PC-9 (cell line): ENCODE measurements at regions of chr7 and their contacts with region 1.

Region 1: GRCh38 chr7:43834463-43835251 is 34.7 kb downstream of the MRPS24 start:
- DNase-seq: peak in 1 of 2 experiments; percentile 83
- H3K4me3 ChIP-seq: peak overlapping the region; percentile 36; the same call in 1 of the 2 replicates
- H3K27ac ChIP-seq: no peak overlapping the region
- H3K4me1 ChIP-seq: no peaks in the 10 kb centered on the region; the same call in 1 of the 2 replicates
- H3K27me3 ChIP-seq: no peaks in the 10 kb centered on the region
- CTCF ChIP-seq: no peak

Region 2: DNA sequence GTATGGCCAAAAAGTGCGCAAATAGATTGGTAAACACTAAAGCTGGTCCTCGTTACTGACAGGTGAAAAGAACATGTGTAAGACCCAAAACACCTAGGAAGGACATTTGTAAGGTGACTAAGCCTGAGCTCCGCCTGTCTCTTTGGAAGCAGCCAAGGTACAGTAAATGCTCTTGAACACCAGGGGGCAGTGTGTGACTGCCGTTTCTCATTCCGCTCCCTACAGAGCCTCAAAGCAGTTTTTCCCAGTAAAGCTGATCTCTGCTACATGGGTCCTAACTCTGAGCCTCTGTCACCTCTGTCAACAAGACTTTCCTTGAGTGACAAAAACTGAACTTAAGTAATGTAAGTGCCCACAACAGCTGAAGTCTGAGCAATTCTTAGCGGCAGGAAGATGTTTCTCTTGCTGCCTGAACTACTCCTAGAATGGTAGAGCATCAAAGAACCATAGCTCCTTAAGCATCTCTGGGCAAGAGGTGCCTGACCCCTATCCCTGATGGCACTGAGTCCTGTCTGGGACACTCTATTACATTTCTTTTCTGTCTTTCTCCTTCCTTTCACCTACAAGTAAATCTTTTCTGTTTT is 1893.8 kb before region 1 on chr7:
- CTCF ChIA-PET with region 1: no interaction called
- POLR2A ChIA-PET with region 1: no interaction called
- intact Hi-C with region 1: loop called (anchors 5 kb)
- DNase-seq: peak; percentile 61 to 69
- H3K4me3 ChIP-seq: no peak overlapping the region
- H3K27ac ChIP-seq: no peak overlapping the region
- H3K4me1 ChIP-seq: no peaks in the 10 kb centered on the region
- H3K27me3 ChIP-seq: peaks cover 23% of the 10 kb centered on the region
- CTCF ChIP-seq: peak; percentile 96

Region 3: DNA sequence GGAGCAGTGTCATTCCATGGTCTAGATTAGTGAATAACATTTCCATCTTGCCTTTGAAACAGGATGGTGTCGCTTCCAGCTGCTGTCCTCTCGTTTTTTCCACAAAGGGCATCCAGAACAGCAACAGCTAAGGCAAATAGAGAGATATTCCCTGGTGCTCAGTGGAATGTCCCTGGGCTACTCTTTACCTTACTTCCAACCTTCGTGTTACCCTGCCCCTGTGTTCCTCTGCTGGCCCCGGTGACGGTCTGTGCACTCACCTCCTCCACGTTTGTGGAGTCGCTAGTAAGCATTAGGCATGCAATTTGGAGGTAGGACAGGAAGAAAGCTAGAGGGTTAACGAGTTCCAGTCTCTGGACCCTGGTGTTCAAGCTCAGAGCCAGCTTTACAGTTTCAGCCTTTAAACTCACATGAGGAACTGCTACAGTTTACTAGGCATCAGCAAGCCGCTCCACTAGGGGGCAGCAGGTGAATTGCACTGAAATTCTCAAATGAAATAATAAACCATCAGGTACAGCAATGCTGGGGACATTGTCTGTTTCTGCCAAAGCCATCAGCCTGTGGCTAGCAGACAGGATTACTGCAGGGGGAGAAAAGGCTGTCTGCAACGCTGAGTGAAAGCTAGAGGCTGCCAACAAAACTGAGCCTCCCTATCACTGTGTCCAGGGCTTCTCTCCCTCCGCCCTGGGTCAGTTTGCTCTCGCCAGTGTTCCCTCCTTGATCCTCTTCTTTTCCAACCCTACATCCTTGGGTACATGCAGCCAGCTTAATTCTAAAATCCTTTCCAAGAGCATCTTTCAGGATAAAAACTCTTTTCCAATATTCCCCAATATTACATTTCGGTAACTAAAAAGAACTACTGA is 893.4 kb before region 1 on chr7:
- CTCF ChIA-PET with region 1: no interaction called
- POLR2A ChIA-PET with region 1: no interaction called
- intact Hi-C with region 1: loop called (anchors 1 kb)
- DNase-seq: peak; percentile 58 to 69
- H3K4me3 ChIP-seq: no peak overlapping the region
- H3K27ac ChIP-seq: no peak overlapping the region
- H3K4me1 ChIP-seq: no peaks in the 10 kb centered on the region
- H3K27me3 ChIP-seq: no peaks in the 10 kb centered on the region
- CTCF ChIP-seq: peak; percentile 98

Region 4: GRCh38 chr7:43647673-43648472 is 186.8 kb before region 1 on chr7:
- CTCF ChIA-PET with region 1: no interaction called
- POLR2A ChIA-PET with region 1: no interaction called
- intact Hi-C with region 1: loop called (anchors 5 kb)
- DNase-seq: peak; percentile 82 to 100
- H3K4me3 ChIP-seq: peak overlapping the region; percentile 28; the same call in 1 of the 2 replicates
- H3K27ac ChIP-seq: peak overlapping the region; percentile 98
- H3K4me1 ChIP-seq: peaks cover 73% of the 10 kb centered on the region
- H3K27me3 ChIP-seq: no peaks in the 10 kb centered on the region
- CTCF ChIP-seq: no peak

Region 5: GRCh38 chr7:43729214-43729923 is 105.3 kb before region 1 on chr7 and contains the start of gene COA1:
- CTCF ChIA-PET with region 1: interaction called, 3 read pairs
- POLR2A ChIA-PET with region 1: interaction called, 3 read pairs
- intact Hi-C with region 1: loop called (anchors 1 kb)
- DNase-seq: peak; percentile 88
- H3K4me3 ChIP-seq: peak within 1 kb of the TSS; percentile 70
- H3K27ac ChIP-seq: peak within 1 kb of the TSS; percentile 73
- H3K4me1 ChIP-seq: peaks cover 39% of the 10 kb centered on the region
- H3K27me3 ChIP-seq: no peaks in the 10 kb centered on the region
- CTCF ChIP-seq: no peak
- total RNA-seq, gene COA1: 128 and 151 TPM in 2 replicates

Region 6: GRCh38 chr7:43766564-43766963 is 68.1 kb before region 1 on chr7:
- CTCF ChIA-PET with region 1: no interaction called
- POLR2A ChIA-PET with region 1: no interaction called
- intact Hi-C with region 1: no loop called
- DNase-seq: no peak
- H3K4me3 ChIP-seq: no peak overlapping the region
- H3K27ac ChIP-seq: no peak overlapping the region
- H3K4me1 ChIP-seq: peaks cover 49% of the 10 kb centered on the region
- H3K27me3 ChIP-seq: no peaks in the 10 kb centered on the region
- CTCF ChIP-seq: no peak